ENCODE measurements at regions of chr1 and their contacts with region 1.

Region 1: GRCh38 chr1:183281553-183282091 is 95.6 kb downstream of the LAMC2 start:
- DNase-seq: peak; percentile 92
- H3K4me3 Mint-ChIP-seq: no peak overlapping the region
- H3K27ac Mint-ChIP-seq: no peak overlapping the region
- H3K4me1 Mint-ChIP-seq: no peaks in the 10 kb centered on the region
- H3K27me3 Mint-ChIP-seq: peaks cover 17% of the 10 kb centered on the region
- CTCF ChIP-seq: peak; percentile 90

Region 2: DNA sequence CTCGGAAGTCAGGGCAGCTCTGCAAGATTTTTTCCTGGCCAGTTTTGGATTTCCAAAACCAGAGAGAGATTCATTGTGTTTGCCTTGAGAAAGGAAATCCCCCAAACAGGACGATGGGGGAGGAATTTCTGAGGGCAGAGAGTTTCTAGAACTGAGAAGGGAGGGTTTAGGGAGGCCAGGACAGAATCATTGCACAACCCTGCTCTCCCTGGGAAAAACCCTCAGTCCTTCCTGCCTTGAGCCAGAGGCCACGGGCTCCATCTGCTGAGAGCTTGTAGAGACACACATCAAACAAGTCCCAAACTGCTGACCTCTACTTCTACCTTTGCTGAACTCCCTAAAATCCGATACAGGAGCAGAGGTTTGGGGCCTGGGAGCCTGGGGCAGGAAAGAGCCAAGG is 36.8 kb after region 1 on chr1:
- CTCF ChIA-PET with region 1: interaction called, 9 read pairs
- intact Hi-C with region 1: loop called (anchors 2 kb)
- DNase-seq: peak; percentile 75
- H3K4me3 Mint-ChIP-seq: no peak overlapping the region
- H3K27ac Mint-ChIP-seq: no peak overlapping the region
- H3K4me1 Mint-ChIP-seq: peaks cover 20% of the 10 kb centered on the region
- H3K27me3 Mint-ChIP-seq: no peaks in the 10 kb centered on the region
- CTCF ChIP-seq: peak; percentile 26

Region 3: GRCh38 chr1:183471743-183472487 is 190.3 kb after region 1 on chr1:
- CTCF ChIA-PET with region 1: no interaction called
- intact Hi-C with region 1: loop called (anchors 1 kb)
- DNase-seq: peak; percentile 96
- H3K4me3 Mint-ChIP-seq: peak overlapping the region; percentile 96
- H3K27ac Mint-ChIP-seq: peak overlapping the region; percentile 99
- H3K4me1 Mint-ChIP-seq: peaks cover 33% of the 10 kb centered on the region
- H3K27me3 Mint-ChIP-seq: no peaks in the 10 kb centered on the region
- CTCF ChIP-seq: no peak

Region 4: GRCh38 chr1:183543619-183544204 is 262.1 kb after region 1 on chr1:
- CTCF ChIA-PET with region 1: interaction called, 4 read pairs
- intact Hi-C with region 1: loop called (anchors 2 kb)
- DNase-seq: peak; percentile 52
- H3K4me3 Mint-ChIP-seq: no peak overlapping the region
- H3K27ac Mint-ChIP-seq: peak overlapping the region; percentile 40
- H3K4me1 Mint-ChIP-seq: peaks cover 24% of the 10 kb centered on the region
- H3K27me3 Mint-ChIP-seq: no peaks in the 10 kb centered on the region
- CTCF ChIP-seq: peak; percentile 64

Region 5: GRCh38 chr1:183622884-183623785 is 341.5 kb after region 1 on chr1:
- CTCF ChIA-PET with region 1: interaction called, 8 read pairs
- intact Hi-C with region 1: loop called (anchors 2 kb)
- DNase-seq: peak; percentile 74
- H3K4me3 Mint-ChIP-seq: no peak overlapping the region
- H3K27ac Mint-ChIP-seq: no peak overlapping the region
- H3K4me1 Mint-ChIP-seq: peaks cover 21% of the 10 kb centered on the region
- H3K27me3 Mint-ChIP-seq: no peaks in the 10 kb centered on the region
- CTCF ChIP-seq: peak; percentile 62

Region 6: GRCh38 chr1:184422490-184423233 is 1141.0 kb after region 1 on chr1:
- CTCF ChIA-PET with region 1: interaction called, 12 read pairs
- intact Hi-C with region 1: no loop called
- DNase-seq: no peak
- H3K4me3 Mint-ChIP-seq: no peak overlapping the region
- H3K27ac Mint-ChIP-seq: no peak overlapping the region
- H3K4me1 Mint-ChIP-seq: peaks cover 36% of the 10 kb centered on the region
- H3K27me3 Mint-ChIP-seq: no peaks in the 10 kb centered on the region
- CTCF ChIP-seq: no peak